Ascending aorta (tissue), 2 donors: ENCODE measurements at regions of chr16 and their contacts with region 1.

Region 1: DNA sequence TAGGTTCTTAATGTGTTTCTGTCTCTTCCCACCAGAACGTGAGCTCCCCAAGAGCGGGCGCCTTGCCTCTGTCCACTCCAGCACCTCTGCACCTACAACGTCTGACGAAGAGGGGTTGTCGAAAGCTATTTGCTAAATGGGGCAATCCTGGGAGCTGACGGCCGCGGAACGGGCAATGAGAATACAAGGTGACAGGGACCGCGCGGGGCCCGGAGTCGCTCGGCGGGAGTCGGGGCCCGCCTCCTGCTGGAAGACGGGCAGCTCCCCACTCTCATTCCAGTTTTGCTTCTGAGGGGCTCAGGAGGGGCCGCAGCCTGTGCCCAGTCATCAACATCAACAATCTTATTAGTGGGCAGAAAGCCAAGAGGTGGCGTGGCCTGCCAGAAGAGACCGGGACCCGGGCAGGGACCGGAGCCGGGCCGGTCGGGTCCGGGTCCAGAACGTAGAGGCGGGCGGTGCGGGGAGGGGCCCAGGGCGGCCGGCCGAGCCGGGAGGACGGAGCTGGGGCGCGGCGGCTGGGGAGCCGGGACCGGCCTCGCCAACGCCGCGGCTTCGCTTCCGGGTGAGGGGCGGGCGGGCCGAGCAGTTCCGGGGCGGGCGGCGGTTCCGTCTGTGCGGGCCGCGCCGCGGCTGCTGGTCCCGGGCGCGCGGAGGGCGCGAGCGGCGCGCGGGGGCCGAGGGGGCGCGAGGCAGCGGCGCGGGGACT is at the start of gene MOSMO:
- DNase-seq: peak in 1 of 2 donors; percentile 84
- H3K4me3 ChIP-seq: peak within 1 kb of the TSS; percentile 87 to 88
- H3K27ac ChIP-seq: peak within 1 kb of the TSS; percentile 65 to 79
- H3K4me1 ChIP-seq: peaks cover 7 to 15% of the 10 kb centered on the region in 2 donors
- H3K27me3 ChIP-seq: no peaks in the 10 kb centered on the region
- CTCF ChIP-seq: no peak
- total RNA-seq, gene MOSMO: 3.6 TPM

Region 2: GRCh38 chr16:20844588-20844987 is 1163.1 kb before region 1 on chr16:
- intact Hi-C with region 1: no loop called
- DNase-seq: no peak
- H3K4me3 ChIP-seq: no peak overlapping the region
- H3K27ac ChIP-seq: no peak overlapping the region
- H3K4me1 ChIP-seq: peaks cover 0 to under 1% of the 10 kb centered on the region in 2 donors
- H3K27me3 ChIP-seq: no peaks in the 10 kb centered on the region
- CTCF ChIP-seq: no peak

Region 3: GRCh38 chr16:21952793-21953540 is 54.7 kb before region 1 on chr16 and contains the start of gene UQCRC2:
- intact Hi-C with region 1: loop called (anchors 2 kb)
- DNase-seq: peak; percentile 48 to 92
- H3K4me3 ChIP-seq: peak within 1 kb of the TSS; percentile 84 to 87
- H3K27ac ChIP-seq: peak within 1 kb of the TSS; percentile 92 to 94
- H3K4me1 ChIP-seq: peaks cover 6 to 20% of the 10 kb centered on the region in 2 donors
- H3K27me3 ChIP-seq: no peaks in the 10 kb centered on the region
- CTCF ChIP-seq: peak in 1 of 3 experiments; percentile 2
- total RNA-seq, gene UQCRC2: 66.3 TPM